Activated CD8-positive, alpha-beta T cell treated with anti-CD3 and anti-CD28 coated beads for 36 hours (primary cell): ENCODE measurements at regions of chr20 and their contacts with region 1.

Region 1: GRCh38 chr20:32521780-32522525 is 63.2 kb downstream of the NOL4L start:
- DNase-seq: peak; percentile 72
- ATAC-seq: peak; percentile 67
- H3K4me3 Mint-ChIP-seq: no peak overlapping the region
- H3K27ac Mint-ChIP-seq: peak overlapping the region; percentile 83
- H3K4me1 Mint-ChIP-seq: peaks cover 57% of the 10 kb centered on the region
- H3K27me3 Mint-ChIP-seq: no peaks in the 10 kb centered on the region
- CTCF ChIP-seq: peak; percentile 94

Region 2: DNA sequence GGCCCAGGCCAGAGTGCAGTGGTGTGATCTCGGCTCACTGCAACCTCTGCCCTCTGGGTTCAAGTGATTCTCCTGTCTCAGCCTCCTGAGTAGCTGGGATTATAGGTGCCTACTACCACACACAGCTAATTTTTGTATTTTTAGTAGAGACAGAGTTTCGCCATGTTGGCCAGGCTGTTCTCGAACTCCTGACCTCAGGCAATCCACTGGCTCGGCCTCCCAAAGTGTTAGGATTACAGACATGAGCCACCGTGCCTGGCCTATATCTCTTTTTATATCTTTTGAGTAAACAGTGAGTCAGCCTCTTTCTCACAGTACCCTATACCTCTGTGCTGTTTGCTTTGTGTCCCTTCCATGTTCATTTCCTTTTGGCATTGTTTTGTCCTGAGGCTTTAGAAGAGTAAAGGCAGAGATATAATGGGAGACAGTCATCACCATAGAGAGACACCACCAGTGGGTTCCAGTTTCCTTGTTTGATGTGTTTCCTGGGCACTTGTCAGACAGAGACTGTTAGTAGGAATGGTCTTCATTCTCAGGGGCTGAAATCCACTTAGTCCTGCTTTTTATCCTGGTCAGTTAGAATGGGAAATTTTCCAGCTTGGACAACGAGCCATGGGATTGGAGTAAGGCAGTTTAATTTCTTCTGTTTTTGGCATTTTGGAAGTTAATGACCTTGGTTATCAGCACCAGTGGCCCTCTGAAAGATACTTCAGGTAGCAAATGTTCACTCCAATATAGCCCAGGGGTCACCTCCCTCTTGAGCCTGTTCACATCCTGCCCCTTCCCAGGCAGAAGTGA is 196.0 kb before region 1 on chr20:
- CTCF ChIA-PET with region 1: no interaction called
- POLR2A ChIA-PET with region 1: no interaction called
- intact Hi-C with region 1: no loop called
- DNase-seq: no peak
- ATAC-seq: no peak
- H3K4me3 Mint-ChIP-seq: no peak overlapping the region
- H3K27ac Mint-ChIP-seq: peak overlapping the region; percentile 55
- H3K4me1 Mint-ChIP-seq: peaks cover 5% of the 10 kb centered on the region
- H3K27me3 Mint-ChIP-seq: no peaks in the 10 kb centered on the region
- CTCF ChIP-seq: no peak

Region 3: DNA sequence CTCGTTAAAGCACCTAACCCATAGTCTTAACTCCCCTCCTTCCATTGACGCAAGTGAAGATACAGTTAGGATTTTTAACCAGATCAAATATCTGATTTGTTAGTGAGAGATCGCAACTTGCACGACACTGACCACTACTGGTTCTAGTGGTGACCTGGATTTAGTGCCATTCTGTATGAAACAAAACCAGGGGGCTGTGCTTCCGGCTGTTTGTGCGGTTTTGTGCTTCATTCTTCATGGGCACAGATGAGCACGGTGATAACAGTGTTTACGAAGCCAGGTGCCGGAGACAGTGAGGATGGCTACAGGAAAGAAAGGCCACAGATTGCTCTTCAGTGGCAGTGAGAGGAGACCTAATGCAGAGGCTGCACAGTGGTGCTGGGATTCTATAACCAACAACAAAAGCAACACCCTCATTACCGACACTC is 12.3 kb before region 1 on chr20:
- CTCF ChIA-PET with region 1: interaction called, 40 read pairs
- POLR2A ChIA-PET with region 1: interaction called, 10 read pairs
- intact Hi-C with region 1: no loop called
- DNase-seq: peak; percentile 91
- ATAC-seq: peak; percentile 70
- H3K4me3 Mint-ChIP-seq: peak overlapping the region; percentile 79
- H3K27ac Mint-ChIP-seq: peak overlapping the region; percentile 93
- H3K4me1 Mint-ChIP-seq: peaks cover 87% of the 10 kb centered on the region
- H3K27me3 Mint-ChIP-seq: no peaks in the 10 kb centered on the region
- CTCF ChIP-seq: no peak

Region 4: GRCh38 chr20:32560989-32561830 is 39.3 kb after region 1 on chr20:
- CTCF ChIA-PET with region 1: interaction called, 13 read pairs
- POLR2A ChIA-PET with region 1: no interaction called
- intact Hi-C with region 1: no loop called
- DNase-seq: peak; percentile 73
- ATAC-seq: peak; percentile 85
- H3K4me3 Mint-ChIP-seq: peak overlapping the region; percentile 54
- H3K27ac Mint-ChIP-seq: peak overlapping the region; percentile 78
- H3K4me1 Mint-ChIP-seq: peaks cover 48% of the 10 kb centered on the region
- H3K27me3 Mint-ChIP-seq: no peaks in the 10 kb centered on the region
- CTCF ChIP-seq: no peak

Region 5: GRCh38 chr20:32589256-32589655 is 67.3 kb after region 1 on chr20:
- CTCF ChIA-PET with region 1: interaction called, 18 read pairs
- POLR2A ChIA-PET with region 1: interaction called, 4 read pairs
- intact Hi-C with region 1: no loop called
- DNase-seq: no peak
- ATAC-seq: no peak
- H3K4me3 Mint-ChIP-seq: no peak overlapping the region
- H3K27ac Mint-ChIP-seq: no peak overlapping the region
- H3K4me1 Mint-ChIP-seq: peaks cover 14% of the 10 kb centered on the region
- H3K27me3 Mint-ChIP-seq: no peaks in the 10 kb centered on the region
- CTCF ChIP-seq: no peak

Region 6: DNA sequence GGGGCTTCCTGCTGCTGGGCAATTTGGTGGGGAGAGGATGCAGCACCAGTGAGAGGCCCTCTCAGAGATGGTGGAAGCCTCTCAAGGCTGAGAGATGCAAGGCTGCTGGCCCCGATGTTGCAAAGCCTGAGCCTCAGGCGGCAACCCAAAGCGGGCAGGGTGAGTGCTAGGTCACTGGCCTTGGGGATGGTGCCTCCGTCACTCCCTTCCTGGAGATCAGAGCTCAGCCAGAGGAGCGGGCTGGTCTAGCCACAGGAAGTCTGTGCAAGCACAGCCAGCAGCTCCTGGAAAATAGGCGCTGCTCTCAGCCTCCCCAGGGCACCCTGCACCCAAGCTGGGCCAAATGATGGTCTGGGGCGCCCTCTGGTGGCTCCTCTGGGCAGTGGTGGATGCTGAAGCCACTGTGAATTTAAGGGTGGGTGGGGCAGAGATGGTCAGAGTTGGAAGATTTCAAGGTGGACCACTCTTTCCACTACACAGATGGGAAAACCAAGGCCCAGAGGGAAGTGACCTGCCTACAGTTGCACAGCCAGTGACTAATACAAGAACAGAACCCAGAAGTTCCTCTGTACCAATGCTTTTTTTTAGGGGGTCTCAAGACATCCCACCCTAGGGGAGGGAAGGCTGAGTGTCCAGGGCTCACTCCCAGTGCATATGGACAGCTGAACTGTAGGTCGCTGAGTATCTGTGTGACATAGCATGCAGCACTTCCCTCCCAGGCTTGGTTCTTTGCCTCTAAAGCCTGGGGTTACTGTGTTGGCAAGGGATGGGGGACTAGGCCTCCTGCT is 131.0 kb after region 1 on chr20:
- CTCF ChIA-PET with region 1: interaction called, 256 read pairs
- POLR2A ChIA-PET with region 1: interaction called, 4 read pairs
- intact Hi-C with region 1: loop called (anchors 1 kb)
- DNase-seq: peak; percentile 90
- ATAC-seq: peak; percentile 98
- H3K4me3 Mint-ChIP-seq: no peak overlapping the region
- H3K27ac Mint-ChIP-seq: no peak overlapping the region
- H3K4me1 Mint-ChIP-seq: peaks cover 7% of the 10 kb centered on the region
- H3K27me3 Mint-ChIP-seq: no peaks in the 10 kb centered on the region
- CTCF ChIP-seq: peak; percentile 95

Region 7: DNA sequence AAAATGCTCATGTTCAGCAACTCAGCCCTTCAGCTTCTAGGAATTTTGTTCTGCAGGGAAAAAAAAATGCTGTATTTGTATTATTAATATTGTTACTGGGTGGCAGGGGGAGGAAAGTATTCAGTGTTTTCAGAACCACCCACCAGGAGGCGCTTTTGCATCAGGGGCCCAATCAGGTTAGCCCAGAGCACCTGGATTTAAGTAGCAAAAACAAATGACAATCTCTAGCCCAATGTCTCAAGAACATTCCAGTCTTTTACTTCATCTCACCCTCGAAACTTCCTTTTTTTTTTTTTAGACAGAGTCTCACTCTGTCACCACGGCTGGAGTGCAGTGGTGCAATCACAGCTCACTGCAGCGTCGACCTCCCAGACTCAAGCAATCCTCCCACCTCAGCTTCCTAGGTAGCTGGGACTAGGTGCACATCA is 152.4 kb after region 1 on chr20:
- CTCF ChIA-PET with region 1: interaction called, 14 read pairs
- POLR2A ChIA-PET with region 1: interaction called, 3 read pairs
- intact Hi-C with region 1: no loop called
- DNase-seq: peak; percentile 87
- ATAC-seq: peak; percentile 37
- H3K4me3 Mint-ChIP-seq: no peak overlapping the region
- H3K27ac Mint-ChIP-seq: peak overlapping the region; percentile 36
- H3K4me1 Mint-ChIP-seq: peaks cover 24% of the 10 kb centered on the region
- H3K27me3 Mint-ChIP-seq: no peaks in the 10 kb centered on the region
- CTCF ChIP-seq: peak; percentile 89